PC-3 (cell line): ENCODE measurements at regions of chr10 and their contacts with region 1.

Region 1: GRCh38 chr10:47438857-47439474 is 44.9 kb downstream of the ANXA8 start:
- DNase-seq: peak; percentile 79
- ATAC-seq: peak; percentile 92
- H3K4me3 ChIP-seq: no peak overlapping the region
- H3K27ac ChIP-seq: no peak overlapping the region
- H3K4me1 ChIP-seq: peaks cover 4% of the 10 kb centered on the region; the same call in 1 of the 2 replicates
- H3K27me3 ChIP-seq: no peaks in the 10 kb centered on the region
- CTCF ChIP-seq: peak; percentile 68

Region 2: DNA sequence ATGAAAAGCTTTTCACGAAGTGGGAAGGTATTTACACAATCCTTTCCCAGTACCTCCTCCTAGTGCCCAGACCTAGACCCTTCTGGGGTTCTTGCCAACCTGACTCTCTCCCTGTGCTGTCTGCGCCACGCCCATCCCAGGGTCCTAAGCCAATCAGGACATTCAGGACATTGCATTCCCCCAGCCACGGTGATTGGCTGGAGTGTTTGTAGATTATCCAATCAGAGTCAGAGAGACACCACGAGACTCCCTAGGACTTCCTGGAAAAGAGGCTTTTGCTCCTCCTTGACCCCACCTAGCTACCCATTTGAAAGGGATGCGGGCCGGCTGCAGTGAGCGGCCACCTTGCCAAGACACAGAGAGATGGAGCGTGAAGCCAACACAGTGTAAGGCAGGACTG is 120.3 kb before region 1 on chr10:
- CTCF ChIA-PET with region 1: no interaction called
- POLR2A ChIA-PET with region 1: no interaction called
- intact Hi-C with region 1: no loop called
- DNase-seq: peak; percentile 20
- ATAC-seq: no peak
- H3K4me3 ChIP-seq: no peak overlapping the region
- H3K27ac ChIP-seq: no peak overlapping the region
- H3K4me1 ChIP-seq: no peaks in the 10 kb centered on the region
- H3K27me3 ChIP-seq: no peaks in the 10 kb centered on the region; the same call in 1 of the 2 replicates
- CTCF ChIP-seq: no peak

Region 3: DNA sequence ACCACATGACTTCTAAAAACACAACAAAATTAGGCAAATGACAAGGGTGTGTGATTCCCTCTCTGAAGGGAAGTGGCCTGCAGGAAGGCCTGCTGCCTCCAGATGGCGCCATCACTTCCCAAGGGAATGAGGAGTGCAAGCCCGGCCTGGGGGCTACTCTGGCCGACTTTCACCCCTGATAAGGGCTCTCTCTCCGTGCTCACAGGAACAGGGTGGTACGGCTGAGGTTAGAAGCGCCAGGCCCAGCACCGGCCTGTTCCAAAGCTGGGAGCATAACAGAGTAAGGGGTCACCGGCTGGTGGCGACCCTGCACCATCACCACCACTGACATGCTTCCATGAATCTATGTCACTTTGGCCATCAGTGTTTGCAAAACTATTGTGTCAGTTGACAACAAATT is 77.7 kb before region 1 on chr10:
- CTCF ChIA-PET with region 1: interaction called, 3 read pairs
- POLR2A ChIA-PET with region 1: no interaction called
- intact Hi-C with region 1: loop called (anchors 10 kb)
- DNase-seq: peak; percentile 56
- ATAC-seq: peak; percentile 50
- H3K4me3 ChIP-seq: no peak overlapping the region
- H3K27ac ChIP-seq: no peak overlapping the region
- H3K4me1 ChIP-seq: 0 out of 2 replicates have a peak, but pooled peaks cover 4% of the 10 kb centered on the region
- H3K27me3 ChIP-seq: no peaks in the 10 kb centered on the region
- CTCF ChIP-seq: peak; percentile 80

Region 4: GRCh38 chr10:47402641-47403301 is 36.2 kb before region 1 on chr10:
- CTCF ChIA-PET with region 1: no interaction called
- POLR2A ChIA-PET with region 1: no interaction called
- intact Hi-C with region 1: loop called (anchors 1 kb)
- DNase-seq: peak; percentile 86
- ATAC-seq: peak; percentile 58
- H3K4me3 ChIP-seq: no peak overlapping the region
- H3K27ac ChIP-seq: peak overlapping the region; percentile 48
- H3K4me1 ChIP-seq: peaks cover 51% of the 10 kb centered on the region
- H3K27me3 ChIP-seq: no peaks in the 10 kb centered on the region
- CTCF ChIP-seq: no peak